ENCODE measurements at regions of chr16 and their contacts with region 1.

Region 1: DNA sequence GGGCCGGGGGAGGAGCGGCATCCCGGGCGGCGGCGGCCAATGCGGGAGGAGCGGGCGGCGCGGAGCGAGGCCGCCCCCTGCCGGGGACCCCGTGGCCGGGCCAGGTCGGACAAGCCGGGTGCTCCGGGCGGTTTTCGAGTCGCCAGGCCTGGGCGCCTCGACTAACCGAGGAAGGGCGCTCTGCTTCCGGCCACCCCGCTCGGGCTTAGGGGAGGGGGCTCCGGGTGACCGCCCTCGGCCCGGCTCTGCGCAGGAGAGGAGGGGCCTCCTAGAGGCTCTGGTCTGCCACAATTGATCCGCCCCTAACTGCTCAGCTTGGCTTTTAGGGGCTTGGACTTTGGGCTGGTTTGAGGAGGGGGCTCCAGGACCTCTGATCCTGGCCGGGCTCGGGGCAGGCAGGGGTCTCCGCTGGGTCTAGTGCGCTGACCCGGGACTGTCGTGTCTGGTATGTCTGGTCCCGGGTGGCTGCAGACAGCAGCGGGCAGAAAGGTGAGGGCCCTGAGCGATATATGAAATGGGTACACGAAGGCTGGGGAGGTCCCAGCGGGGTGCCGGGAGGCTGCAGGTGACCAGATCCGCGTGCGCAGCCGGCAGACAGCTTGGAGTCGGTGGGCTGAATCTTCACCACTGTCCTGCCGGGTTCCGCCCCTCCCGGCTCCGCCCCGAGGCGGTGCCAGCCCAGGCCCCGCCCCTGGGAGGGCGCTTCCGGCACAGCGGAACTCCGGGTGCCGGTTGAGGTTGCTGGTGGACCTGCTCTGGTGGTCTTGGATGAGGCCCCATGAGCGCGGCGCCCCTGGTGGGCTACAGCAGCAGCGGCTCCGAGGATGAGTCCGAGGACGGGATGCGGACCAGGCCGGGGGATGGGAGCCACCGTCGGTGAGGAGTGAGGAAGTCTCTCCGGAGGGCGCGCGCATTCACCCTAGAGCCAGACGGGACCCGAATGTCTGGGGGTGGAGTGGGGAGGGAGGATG is at the start of gene USB1:
- DNase-seq: peak; percentile 81 to 90 (median 85)
- H3K4me3 ChIP-seq: peak within 1 kb of the TSS; percentile 76 to 93
- H3K4me3 Mint-ChIP-seq: peak within 1 kb of the TSS; percentile 90 to 95 (median 92)
- H3K27ac ChIP-seq: peak within 1 kb of the TSS; percentile 75
- H3K27ac Mint-ChIP-seq: peak within 1 kb of the TSS; percentile 88 to 96 (median 94)
- H3K4me1 ChIP-seq: peaks cover 46% of the 10 kb centered on the region
- H3K4me1 Mint-ChIP-seq: peaks cover 40 to 75% (median 51%) of the 10 kb centered on the region in 4 donors
- H3K27me3 ChIP-seq: no peaks in the 10 kb centered on the region
- H3K27me3 Mint-ChIP-seq: no peaks in the 10 kb centered on the region
- total RNA-seq, gene USB1: 36.4 to 39.5 TPM

Region 2: GRCh38 chr16:57764341-57765159 is 236.4 kb before region 1 on chr16:
- CTCF ChIA-PET with region 1: no interaction called
- POLR2A ChIA-PET with region 1: no interaction called
- intact Hi-C with region 1: no loop called
- DNase-seq: peak in 3 of 5 donors; percentile 8 to 50 (median 12)
- H3K4me3 ChIP-seq: no peak overlapping the region
- H3K4me3 Mint-ChIP-seq: no peak overlapping the region
- H3K27ac ChIP-seq: no peak overlapping the region
- H3K27ac Mint-ChIP-seq: no peak overlapping the region
- H3K4me1 ChIP-seq: no peaks in the 10 kb centered on the region
- H3K4me1 Mint-ChIP-seq: no peaks in the 10 kb centered on the region
- H3K27me3 ChIP-seq: no peaks in the 10 kb centered on the region
- H3K27me3 Mint-ChIP-seq: no peaks in the 10 kb centered on the region

Region 3: GRCh38 chr16:57795431-57795878 is 205.5 kb before region 1 on chr16:
- CTCF ChIA-PET with region 1: no interaction called
- POLR2A ChIA-PET with region 1: no interaction called
- intact Hi-C with region 1: loop called (anchors 5 kb)
- DNase-seq: peak in 3 of 5 donors; percentile 20 to 31 (median 22)
- H3K4me3 ChIP-seq: no peak overlapping the region
- H3K4me3 Mint-ChIP-seq: no peak overlapping the region
- H3K27ac ChIP-seq: no peak overlapping the region
- H3K27ac Mint-ChIP-seq: no peak overlapping the region
- H3K4me1 ChIP-seq: peaks cover 15% of the 10 kb centered on the region
- H3K4me1 Mint-ChIP-seq: peaks cover 13 to 23% (median 16%) of the 10 kb centered on the region in 4 donors
- H3K27me3 ChIP-seq: no peaks in the 10 kb centered on the region
- H3K27me3 Mint-ChIP-seq: peaks cover 0 to 1% of the 10 kb centered on the region in 2 donors

Region 4: GRCh38 chr16:57899771-57900661 is 101.0 kb before region 1 on chr16:
- CTCF ChIA-PET with region 1: interaction called, 115 read pairs
- POLR2A ChIA-PET with region 1: interaction called, 12 read pairs
- intact Hi-C with region 1: loop called (anchors 1 kb)
- DNase-seq: peak; percentile 68 to 75 (median 71)
- H3K4me3 ChIP-seq: no peak overlapping the region
- H3K4me3 Mint-ChIP-seq: no peak overlapping the region
- H3K27ac ChIP-seq: no peak overlapping the region
- H3K27ac Mint-ChIP-seq: peak overlapping the region in 1 of 7 donors; percentile 53
- H3K4me1 ChIP-seq: peaks cover under 1% of the 10 kb centered on the region
- H3K4me1 Mint-ChIP-seq: peaks cover under 1 to 5% (median 4%) of the 10 kb centered on the region in 4 donors
- H3K27me3 ChIP-seq: no peaks in the 10 kb centered on the region
- H3K27me3 Mint-ChIP-seq: peaks cover 5 to 21% of the 10 kb centered on the region in 2 donors

Region 5: GRCh38 chr16:57984331-57985203 is 16.4 kb before region 1 on chr16:
- CTCF ChIA-PET with region 1: interaction called, 18 read pairs
- POLR2A ChIA-PET with region 1: interaction called, 83 read pairs
- intact Hi-C with region 1: loop called (anchors 1 kb)
- DNase-seq: peak; percentile 84 to 95 (median 92)
- H3K4me3 ChIP-seq: peak overlapping the region; percentile 73 to 76
- H3K4me3 Mint-ChIP-seq: peak overlapping the region; percentile 80 to 94 (median 90)
- H3K27ac ChIP-seq: peak overlapping the region; percentile 57
- H3K27ac Mint-ChIP-seq: peak overlapping the region; percentile 75 to 94 (median 85)
- H3K4me1 ChIP-seq: peaks cover 15% of the 10 kb centered on the region
- H3K4me1 Mint-ChIP-seq: peaks cover 4 to 26% (median 16%) of the 10 kb centered on the region in 4 donors
- H3K27me3 ChIP-seq: no peaks in the 10 kb centered on the region
- H3K27me3 Mint-ChIP-seq: no peaks in the 10 kb centered on the region

Measured in CD4-positive, alpha-beta memory T cell (primary cell).